ENCODE measurements at regions of chr22 and their contacts with region 1.

Region 1: GRCh38 chr22:50276143-50276542 is 6.0 kb upstream of the MAPK11 start:
- DNase-seq: peak in 4 of 9 experiments; percentile 41 to 81 (median 70)
- ATAC-seq: peak; percentile 74
- H3K4me3 ChIP-seq: no peak overlapping the region
- H3K4me3 Mint-ChIP-seq: no peak overlapping the region
- H3K27ac ChIP-seq: no peak overlapping the region
- H3K27ac Mint-ChIP-seq: no peak overlapping the region
- H3K4me1 ChIP-seq: peaks cover 10% of the 10 kb centered on the region
- H3K4me1 Mint-ChIP-seq: peaks cover 3% of the 10 kb centered on the region
- H3K27me3 ChIP-seq: no peaks in the 10 kb centered on the region
- H3K27me3 Mint-ChIP-seq: peaks cover 3% of the 10 kb centered on the region
- CTCF ChIP-seq: peak; percentile 41

Region 2: GRCh38 chr22:50314455-50315288 is 38.5 kb after region 1 on chr22:
- CTCF ChIA-PET with region 1: interaction called, 3 read pairs
- POLR2A ChIA-PET with region 1: no interaction called
- intact Hi-C with region 1: loop called in 1 of 2 experiments (anchors 2 kb)
- DNase-seq: peak; percentile 41 to 86 (median 76)
- ATAC-seq: peak; percentile 94
- H3K4me3 ChIP-seq: peak overlapping the region; percentile 44 to 51
- H3K4me3 Mint-ChIP-seq: peak overlapping the region; percentile 81
- H3K27ac ChIP-seq: peak overlapping the region; percentile 51 to 70
- H3K27ac Mint-ChIP-seq: peak overlapping the region; percentile 93
- H3K4me1 ChIP-seq: peaks cover 19% of the 10 kb centered on the region
- H3K4me1 Mint-ChIP-seq: peaks cover 16% of the 10 kb centered on the region
- H3K27me3 ChIP-seq: no peaks in the 10 kb centered on the region
- H3K27me3 Mint-ChIP-seq: no peaks in the 10 kb centered on the region
- CTCF ChIP-seq: no peak

Measured in CD8-positive, alpha-beta T cell (primary cell).